ENCODE measurements at regions of chr17 and their contacts with region 1.

Region 1: DNA sequence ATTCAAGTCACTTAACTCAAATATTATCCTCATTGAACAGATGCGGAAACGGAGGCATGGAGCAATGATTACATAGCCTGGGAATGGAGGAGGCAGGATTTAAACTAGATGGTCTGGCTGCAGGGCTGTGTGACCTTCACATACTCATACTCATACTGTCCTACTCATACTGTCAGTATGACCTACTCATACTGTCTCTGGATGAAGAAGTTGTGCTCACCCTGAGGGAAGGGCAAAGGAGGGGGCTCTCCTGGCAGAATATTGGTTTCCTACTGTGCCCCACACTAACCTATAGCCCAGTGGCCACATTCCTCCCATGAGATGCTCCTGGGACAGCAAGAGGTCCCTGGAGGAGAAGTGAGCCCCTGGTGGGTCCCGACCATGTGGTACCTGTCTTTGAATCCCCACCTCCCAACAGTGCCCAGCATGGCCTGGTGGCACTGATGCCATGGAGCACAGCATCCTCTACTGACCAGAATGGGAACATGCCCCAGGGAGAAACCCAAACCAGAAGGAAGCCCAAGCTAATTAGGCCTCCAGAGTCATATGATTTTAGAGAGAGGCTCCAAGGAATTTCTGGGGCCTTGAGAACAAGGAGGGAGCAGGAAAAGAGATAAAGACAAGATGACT is 197.3 kb upstream of the SDK2 start:
- DNase-seq: no peak
- ATAC-seq: peak; percentile 90
- H3K4me3 ChIP-seq: no peak overlapping the region
- H3K27ac ChIP-seq: no peak overlapping the region
- H3K4me1 ChIP-seq: no peaks in the 10 kb centered on the region
- H3K27me3 ChIP-seq: peaks cover 14% of the 10 kb centered on the region
- CTCF ChIP-seq: peak; percentile 62 to 95 (median 84); a peak in 5 of 6 replicates
- POLR2A ChIP-seq: no peak
- RAD21 ChIP-seq: peak; percentile 86

Region 2: DNA sequence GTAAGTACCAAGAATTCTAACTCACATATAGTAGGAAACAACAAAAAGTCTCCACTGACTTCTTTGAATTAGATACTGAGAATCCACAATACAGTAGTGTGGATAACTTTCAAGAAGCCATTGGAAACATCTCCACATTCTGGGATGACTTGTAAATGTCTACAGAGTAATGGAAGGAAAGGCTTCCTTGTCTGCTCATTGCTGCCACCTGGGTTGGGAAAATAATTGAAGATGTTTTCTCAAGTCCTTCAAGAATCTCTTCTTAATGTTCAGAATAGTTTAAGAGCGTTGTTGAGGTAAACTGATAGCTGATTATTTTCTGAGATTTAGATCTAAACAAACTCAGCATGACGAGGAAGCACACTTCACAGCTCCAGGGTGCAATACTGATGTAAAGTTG is 593.8 kb before region 1 on chr17:
- CTCF ChIA-PET with region 1: no interaction called
- POLR2A ChIA-PET with region 1: no interaction called
- RAD21 ChIA-PET with region 1: no interaction called
- intact Hi-C with region 1: loop called (anchors 10 kb)
- DNase-seq: no peak
- ATAC-seq: peak; percentile 20; the same call in 1 of the 2 replicates
- H3K4me3 ChIP-seq: no peak overlapping the region
- H3K27ac ChIP-seq: no peak overlapping the region
- H3K4me1 ChIP-seq: no peaks in the 10 kb centered on the region
- H3K27me3 ChIP-seq: no peaks in the 10 kb centered on the region
- CTCF ChIP-seq: peak in 2 of 3 experiments; percentile 32 to 39; a peak in 2 of 6 replicates
- POLR2A ChIP-seq: no peak
- RAD21 ChIP-seq: peak; percentile 53; the same call in 1 of the 2 replicates

Region 3: GRCh38 chr17:73643001-73643851 is 198.3 kb before region 1 on chr17:
- CTCF ChIA-PET with region 1: no interaction called
- POLR2A ChIA-PET with region 1: no interaction called
- RAD21 ChIA-PET with region 1: no interaction called
- intact Hi-C with region 1: no loop called
- DNase-seq: no peak
- ATAC-seq: no peak
- H3K4me3 ChIP-seq: no peak overlapping the region
- H3K27ac ChIP-seq: no peak overlapping the region
- H3K4me1 ChIP-seq: no peaks in the 10 kb centered on the region
- H3K27me3 ChIP-seq: peaks cover 17% of the 10 kb centered on the region; the same call in 1 of the 2 replicates
- CTCF ChIP-seq: no peak
- POLR2A ChIP-seq: no peak
- RAD21 ChIP-seq: no peak